H1 (cell line): ENCODE measurements at regions of chr1 and their contacts with region 1.

Region 1: DNA sequence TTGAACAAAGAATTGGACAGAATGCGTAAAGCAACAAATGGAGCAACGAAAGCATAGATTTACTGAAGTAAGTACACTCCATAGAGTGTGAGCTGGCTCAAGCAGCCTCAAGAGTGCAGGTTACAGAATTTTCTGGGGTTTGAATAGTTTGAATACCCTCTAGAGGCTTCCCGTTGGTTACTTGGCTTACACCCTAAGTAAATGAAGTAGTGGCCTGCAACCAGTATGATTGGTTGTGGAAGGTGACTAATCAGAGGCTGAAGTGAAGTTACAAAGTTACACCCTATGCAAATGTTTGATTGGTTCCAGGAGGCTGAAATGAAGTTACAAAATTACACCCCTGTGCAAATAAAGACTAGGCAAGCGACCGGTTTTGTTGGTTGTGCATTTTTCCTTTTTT is 10.9 kb downstream of the TCEANC2 start:
- DNase-seq: no peak
- H3K4me3 ChIP-seq: no peak overlapping the region
- H3K27ac ChIP-seq: no peak overlapping the region
- H3K4me1 ChIP-seq: no peaks in the 10 kb centered on the region
- H3K27me3 ChIP-seq: no peaks in the 10 kb centered on the region
- CTCF ChIP-seq: no peak
- EP300 ChIP-seq: no peak
- POLR2A ChIP-seq: no peak
- RAD21 ChIP-seq: no peak

Region 2: GRCh38 chr1:53889304-53890298 is 174.7 kb before region 1 on chr1 and contains the start of gene YIPF1:
- CTCF ChIA-PET with region 1: no interaction called
- POLR2A ChIA-PET with region 1: no interaction called
- DNase-seq: peak; percentile 82 to 85
- H3K4me3 ChIP-seq: peak within 1 kb of the TSS; percentile 87 to 96 (median 92)
- H3K27ac ChIP-seq: peak within 1 kb of the TSS; percentile 62; the same call in 1 of the 2 replicates
- H3K4me1 ChIP-seq: peaks cover 0 to 7% (median 2%) of the 10 kb centered on the region in 4 experiments; a peak in 3 of 7 replicates
- H3K27me3 ChIP-seq: no peaks in the 10 kb centered on the region; a peak in 1 of 7 replicates
- CTCF ChIP-seq: no peak
- EP300 ChIP-seq: no peak
- POLR2A ChIP-seq: peak in 1 of 2 experiments; percentile 62; a peak in 2 of 3 replicates
- RAD21 ChIP-seq: no peak
- total RNA-seq, gene YIPF1: 31.8 and 32.6 TPM in 2 replicates

Region 3: DNA sequence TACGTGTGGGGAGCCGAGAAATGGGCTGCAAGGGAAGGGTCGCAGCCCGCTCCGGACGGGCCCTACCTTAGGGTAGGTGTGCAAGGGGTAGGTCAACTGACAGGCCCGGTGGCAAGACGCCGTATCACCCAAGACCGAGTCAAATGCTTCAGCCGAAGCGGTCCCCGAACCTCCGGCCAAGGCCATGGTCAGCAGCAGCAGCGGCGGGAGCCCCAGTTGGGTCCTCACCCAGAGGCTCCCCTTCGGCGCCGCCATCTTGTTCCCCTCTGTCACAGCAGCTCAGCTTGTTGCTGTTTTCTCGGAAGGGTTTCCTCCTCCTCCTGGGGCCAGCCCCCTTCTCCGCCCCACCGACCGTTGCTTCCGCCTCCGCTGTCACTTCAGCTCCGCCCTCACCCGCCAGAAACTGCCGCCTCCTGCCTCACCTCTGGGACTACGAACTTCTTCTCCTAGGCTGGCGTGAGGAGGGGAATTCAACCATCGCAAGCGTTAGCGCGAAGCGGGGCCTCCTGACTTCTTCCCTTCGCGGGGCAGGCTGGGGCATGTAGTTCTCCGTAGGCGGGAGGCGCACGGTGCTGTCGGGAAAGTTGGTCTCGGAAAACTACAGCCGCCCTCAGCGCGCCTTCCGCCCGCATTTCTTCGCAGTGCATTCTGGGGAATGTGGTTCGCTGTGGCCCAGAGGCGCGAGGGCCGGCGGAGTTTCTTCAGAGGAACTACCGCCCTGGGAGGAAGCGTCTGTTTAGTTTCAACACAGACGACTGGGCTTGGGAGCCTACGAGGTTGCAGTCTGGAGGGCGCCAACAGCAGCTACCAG is 11.2 kb before region 1 on chr1 and contains the starts of genes TCEANC2 and TMEM59:
- CTCF ChIA-PET with region 1: interaction called, 3 read pairs
- POLR2A ChIA-PET with region 1: interaction called, 10 read pairs
- DNase-seq: peak; percentile 88 to 90
- H3K4me3 ChIP-seq: peak within 1 kb of the TSS; percentile 72 to 96 (median 81)
- H3K27ac ChIP-seq: peak within 1 kb of the TSS; percentile 90
- H3K4me1 ChIP-seq: peaks cover 0 to 5% (median 3%) of the 10 kb centered on the region in 4 experiments; a peak in 4 of 7 replicates
- H3K27me3 ChIP-seq: no peaks in the 10 kb centered on the region
- CTCF ChIP-seq: no peak
- EP300 ChIP-seq: no peak
- POLR2A ChIP-seq: peak in 1 of 2 experiments; percentile 55; a peak in 2 of 3 replicates
- RAD21 ChIP-seq: no peak
- total RNA-seq, gene TCEANC2: 6.4 and 8.2 TPM in 2 replicates
- total RNA-seq, gene TMEM59: 123 and 139 TPM in 2 replicates

Region 4: GRCh38 chr1:54253480-54253879 is 189.2 kb after region 1 on chr1:
- CTCF ChIA-PET with region 1: no interaction called
- POLR2A ChIA-PET with region 1: no interaction called
- DNase-seq: no peak
- H3K4me3 ChIP-seq: no peak overlapping the region
- H3K27ac ChIP-seq: no peak overlapping the region
- H3K4me1 ChIP-seq: peaks cover 3 to 10% (median 3%) of the 10 kb centered on the region in 4 experiments
- H3K27me3 ChIP-seq: no peaks in the 10 kb centered on the region
- CTCF ChIP-seq: no peak
- EP300 ChIP-seq: no peak
- POLR2A ChIP-seq: no peak
- RAD21 ChIP-seq: no peak